Caco-2 (cell line): ENCODE measurements at regions of chr1 and their contacts with region 1.

Region 1: DNA sequence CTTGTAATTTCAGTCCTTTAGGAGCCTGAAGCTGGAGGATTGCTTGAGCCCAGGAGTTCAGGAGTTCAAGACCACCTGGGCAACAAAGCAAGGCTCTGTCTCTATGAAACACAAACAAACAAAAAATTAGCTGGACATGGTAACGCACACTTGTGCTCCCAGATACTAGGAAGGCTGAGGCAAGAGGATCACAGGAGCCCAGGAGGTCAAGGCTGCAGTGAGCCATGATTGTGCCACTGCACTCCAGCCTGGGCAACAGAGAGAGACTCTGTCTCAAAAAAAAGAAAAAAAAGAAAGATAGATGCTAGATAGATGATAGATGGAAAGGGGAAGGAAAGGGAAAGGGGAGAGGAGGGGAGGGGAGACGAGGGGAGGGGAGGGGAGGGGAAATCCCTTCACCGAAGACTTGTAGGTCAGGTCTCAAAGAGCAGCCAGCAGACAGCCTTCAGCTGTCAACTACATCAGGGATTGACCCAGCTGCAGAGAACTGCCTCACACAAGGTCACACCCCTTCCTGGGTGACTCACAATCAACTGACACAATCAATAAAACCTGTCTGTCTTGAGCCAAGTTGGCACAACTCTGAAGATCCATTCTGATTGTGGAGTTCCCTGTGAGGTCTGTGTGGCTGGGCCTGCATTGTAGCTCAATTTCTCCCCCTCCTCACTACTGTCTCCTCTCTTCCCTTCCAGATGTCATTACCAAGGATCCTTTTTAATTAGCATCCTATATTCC is 200.6 kb downstream of the RGS7 start:
- DNase-seq: peak in 1 of 2 experiments; percentile 5
- H3K4me3 ChIP-seq: no peak overlapping the region
- H3K4me3 Mint-ChIP-seq: no peak overlapping the region
- H3K27ac Mint-ChIP-seq: no peak overlapping the region
- H3K4me1 ChIP-seq: no peaks in the 10 kb centered on the region
- H3K4me1 Mint-ChIP-seq: peaks cover 7% of the 10 kb centered on the region
- H3K27me3 ChIP-seq: no peaks in the 10 kb centered on the region
- H3K27me3 Mint-ChIP-seq: no peaks in the 10 kb centered on the region
- CTCF ChIP-seq: no peak

Region 2: GRCh38 chr1:241007668-241008067 is 148.7 kb before region 1 on chr1:
- CTCF ChIA-PET with region 1: no interaction called
- POLR2A ChIA-PET with region 1: no interaction called
- intact Hi-C with region 1: no loop called
- DNase-seq: no peak
- H3K4me3 ChIP-seq: no peak overlapping the region
- H3K4me3 Mint-ChIP-seq: no peak overlapping the region
- H3K27ac Mint-ChIP-seq: no peak overlapping the region
- H3K4me1 ChIP-seq: no peaks in the 10 kb centered on the region
- H3K4me1 Mint-ChIP-seq: no peaks in the 10 kb centered on the region
- H3K27me3 ChIP-seq: no peaks in the 10 kb centered on the region
- H3K27me3 Mint-ChIP-seq: no peaks in the 10 kb centered on the region
- CTCF ChIP-seq: no peak

Region 3: DNA sequence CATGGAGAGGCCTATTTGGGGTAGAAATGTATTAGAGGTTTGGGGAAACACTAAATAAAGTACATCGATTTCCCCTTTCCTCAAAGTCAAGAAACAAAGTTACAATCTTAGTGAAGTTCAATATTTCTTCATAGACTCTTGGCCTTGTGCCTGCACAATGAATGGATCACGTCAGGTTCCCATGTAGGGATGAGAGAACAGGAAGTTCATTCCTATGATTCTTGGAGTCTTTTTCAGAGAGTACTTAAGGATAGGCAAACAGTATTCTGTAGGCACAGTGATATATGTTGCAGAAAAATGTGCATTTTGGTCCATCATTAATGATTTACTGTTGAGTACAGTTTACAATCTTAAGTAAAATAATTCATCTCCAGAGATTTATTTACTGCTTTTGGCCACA is 74.9 kb before region 1 on chr1:
- CTCF ChIA-PET with region 1: no interaction called
- POLR2A ChIA-PET with region 1: no interaction called
- intact Hi-C with region 1: no loop called
- DNase-seq: no peak
- H3K4me3 ChIP-seq: no peak overlapping the region
- H3K4me3 Mint-ChIP-seq: no peak overlapping the region
- H3K27ac Mint-ChIP-seq: no peak overlapping the region
- H3K4me1 ChIP-seq: no peaks in the 10 kb centered on the region
- H3K4me1 Mint-ChIP-seq: no peaks in the 10 kb centered on the region
- H3K27me3 ChIP-seq: no peaks in the 10 kb centered on the region
- H3K27me3 Mint-ChIP-seq: no peaks in the 10 kb centered on the region
- CTCF ChIP-seq: no peak

Region 4: DNA sequence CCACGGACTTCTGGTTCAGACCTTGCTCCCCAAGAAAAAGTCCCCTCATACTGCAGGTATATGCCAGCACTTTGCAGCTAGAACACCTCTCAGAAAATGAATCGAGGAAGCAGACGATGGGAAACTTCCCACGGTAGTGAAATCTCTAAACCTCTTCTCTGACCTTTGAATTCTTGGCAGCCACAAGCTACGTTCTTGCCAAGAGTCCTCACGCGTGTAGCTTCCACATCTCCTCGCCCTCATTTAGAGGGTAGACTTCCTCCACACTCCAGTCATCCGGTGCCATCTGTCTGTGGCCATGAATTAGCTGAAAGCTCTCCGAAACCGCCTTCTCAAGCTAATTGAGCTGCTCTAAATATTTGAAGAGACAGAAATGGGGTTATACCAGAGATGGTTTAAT is 72.8 kb after region 1 on chr1:
- CTCF ChIA-PET with region 1: no interaction called
- POLR2A ChIA-PET with region 1: no interaction called
- intact Hi-C with region 1: loop called (anchors 2 kb)
- DNase-seq: no peak
- H3K4me3 ChIP-seq: no peak overlapping the region
- H3K4me3 Mint-ChIP-seq: no peak overlapping the region
- H3K27ac Mint-ChIP-seq: no peak overlapping the region
- H3K4me1 ChIP-seq: no peaks in the 10 kb centered on the region
- H3K4me1 Mint-ChIP-seq: no peaks in the 10 kb centered on the region
- H3K27me3 ChIP-seq: no peaks in the 10 kb centered on the region
- H3K27me3 Mint-ChIP-seq: no peaks in the 10 kb centered on the region
- CTCF ChIP-seq: no peak

Region 5: DNA sequence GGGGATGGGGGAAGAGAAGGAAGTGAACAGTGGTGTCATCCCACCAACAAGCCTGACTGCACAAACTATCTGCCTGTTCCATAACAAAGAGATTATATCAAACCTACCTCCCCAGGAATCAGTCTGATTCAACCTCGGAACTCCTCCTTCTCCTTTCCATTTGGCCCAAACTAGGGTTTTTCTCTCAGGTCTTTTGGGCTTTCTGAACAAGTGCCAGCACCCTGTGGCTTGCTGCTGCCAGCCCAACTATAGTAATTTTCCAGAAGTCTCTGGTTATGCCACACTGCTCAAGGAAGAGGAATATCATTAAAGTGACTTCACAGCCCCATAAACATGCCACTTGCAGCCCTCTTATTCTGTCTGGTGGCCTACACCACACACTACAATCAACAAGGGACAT is 130.1 kb after region 1 on chr1:
- CTCF ChIA-PET with region 1: no interaction called
- POLR2A ChIA-PET with region 1: no interaction called
- intact Hi-C with region 1: loop called (anchors 1 kb)
- DNase-seq: no peak
- H3K4me3 ChIP-seq: no peak overlapping the region
- H3K4me3 Mint-ChIP-seq: no peak overlapping the region
- H3K27ac Mint-ChIP-seq: no peak overlapping the region
- H3K4me1 ChIP-seq: no peaks in the 10 kb centered on the region
- H3K4me1 Mint-ChIP-seq: no peaks in the 10 kb centered on the region
- H3K27me3 ChIP-seq: no peaks in the 10 kb centered on the region; the same call in 1 of the 2 replicates
- H3K27me3 Mint-ChIP-seq: no peaks in the 10 kb centered on the region
- CTCF ChIP-seq: no peak

Region 6: DNA sequence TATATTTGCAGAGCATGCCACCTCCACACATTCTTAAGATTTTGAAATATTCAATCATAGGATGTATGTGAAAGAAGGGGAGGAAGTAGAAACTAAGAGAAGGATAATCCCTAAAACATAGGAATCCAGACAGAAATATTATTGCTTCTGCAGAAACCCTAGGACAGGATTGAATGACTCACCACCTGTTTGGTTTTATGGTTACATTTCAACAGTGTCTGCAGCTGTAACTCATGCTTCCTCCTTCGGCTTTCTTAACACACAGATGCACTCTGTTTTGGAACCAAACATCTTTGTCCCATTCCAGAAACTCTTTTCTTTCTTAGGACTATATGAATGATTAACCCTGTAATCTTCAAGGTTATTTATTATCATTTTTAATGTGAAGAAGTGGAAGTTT is 179.9 kb after region 1 on chr1:
- CTCF ChIA-PET with region 1: no interaction called
- POLR2A ChIA-PET with region 1: no interaction called
- intact Hi-C with region 1: no loop called
- DNase-seq: no peak
- H3K4me3 ChIP-seq: no peak overlapping the region
- H3K4me3 Mint-ChIP-seq: no peak overlapping the region
- H3K27ac Mint-ChIP-seq: no peak overlapping the region
- H3K4me1 ChIP-seq: no peaks in the 10 kb centered on the region
- H3K4me1 Mint-ChIP-seq: no peaks in the 10 kb centered on the region
- H3K27me3 ChIP-seq: no peaks in the 10 kb centered on the region
- H3K27me3 Mint-ChIP-seq: peaks cover 17% of the 10 kb centered on the region
- CTCF ChIP-seq: no peak

Region 7: DNA sequence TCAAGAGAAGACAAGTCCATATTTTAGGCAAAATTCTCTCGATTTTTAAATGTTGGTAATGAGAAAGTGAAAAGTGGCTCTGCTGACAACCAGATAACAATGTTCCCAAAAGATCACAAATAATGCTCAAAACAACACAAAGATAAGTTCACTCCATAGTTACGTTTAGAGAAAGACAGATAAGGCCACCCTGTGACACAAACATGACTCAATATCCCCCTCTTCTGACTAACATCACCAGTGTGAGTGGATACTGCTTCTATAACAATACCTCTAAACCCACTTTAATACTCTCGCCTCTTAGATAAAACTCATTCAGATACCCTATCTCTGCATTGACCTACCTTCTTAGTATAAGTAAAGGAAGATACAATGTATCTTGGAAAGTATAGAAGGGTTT is 251.8 kb after region 1 on chr1:
- CTCF ChIA-PET with region 1: no interaction called
- POLR2A ChIA-PET with region 1: no interaction called
- intact Hi-C with region 1: loop called (anchors 5 kb)
- DNase-seq: peak in 1 of 2 experiments; percentile 4
- H3K4me3 ChIP-seq: no peak overlapping the region
- H3K4me3 Mint-ChIP-seq: no peak overlapping the region
- H3K27ac Mint-ChIP-seq: no peak overlapping the region
- H3K4me1 ChIP-seq: no peaks in the 10 kb centered on the region
- H3K4me1 Mint-ChIP-seq: no peaks in the 10 kb centered on the region
- H3K27me3 ChIP-seq: no peaks in the 10 kb centered on the region
- H3K27me3 Mint-ChIP-seq: peaks cover 6% of the 10 kb centered on the region
- CTCF ChIP-seq: peak; percentile 18 to 28

Region 8: GRCh38 chr1:241485554-241485992 is 329.2 kb after region 1 on chr1:
- CTCF ChIA-PET with region 1: no interaction called
- POLR2A ChIA-PET with region 1: no interaction called
- intact Hi-C with region 1: loop called (anchors 10 kb)
- DNase-seq: peak in 1 of 2 experiments; percentile 13
- H3K4me3 ChIP-seq: no peak overlapping the region
- H3K4me3 Mint-ChIP-seq: no peak overlapping the region
- H3K27ac Mint-ChIP-seq: no peak overlapping the region
- H3K4me1 ChIP-seq: no peaks in the 10 kb centered on the region
- H3K4me1 Mint-ChIP-seq: no peaks in the 10 kb centered on the region
- H3K27me3 ChIP-seq: no peaks in the 10 kb centered on the region
- H3K27me3 Mint-ChIP-seq: no peaks in the 10 kb centered on the region
- CTCF ChIP-seq: peak; percentile 40 to 63

Region 9: GRCh38 chr1:241499910-241500309 is 343.5 kb after region 1 on chr1:
- CTCF ChIA-PET with region 1: no interaction called
- POLR2A ChIA-PET with region 1: no interaction called
- intact Hi-C with region 1: loop called (anchors 1 kb)
- DNase-seq: no peak
- H3K4me3 ChIP-seq: no peak overlapping the region
- H3K4me3 Mint-ChIP-seq: no peak overlapping the region
- H3K27ac Mint-ChIP-seq: no peak overlapping the region
- H3K4me1 ChIP-seq: no peaks in the 10 kb centered on the region
- H3K4me1 Mint-ChIP-seq: no peaks in the 10 kb centered on the region
- H3K27me3 ChIP-seq: no peaks in the 10 kb centered on the region
- H3K27me3 Mint-ChIP-seq: no peaks in the 10 kb centered on the region
- CTCF ChIP-seq: peak; percentile 34 to 44

Region 10: DNA sequence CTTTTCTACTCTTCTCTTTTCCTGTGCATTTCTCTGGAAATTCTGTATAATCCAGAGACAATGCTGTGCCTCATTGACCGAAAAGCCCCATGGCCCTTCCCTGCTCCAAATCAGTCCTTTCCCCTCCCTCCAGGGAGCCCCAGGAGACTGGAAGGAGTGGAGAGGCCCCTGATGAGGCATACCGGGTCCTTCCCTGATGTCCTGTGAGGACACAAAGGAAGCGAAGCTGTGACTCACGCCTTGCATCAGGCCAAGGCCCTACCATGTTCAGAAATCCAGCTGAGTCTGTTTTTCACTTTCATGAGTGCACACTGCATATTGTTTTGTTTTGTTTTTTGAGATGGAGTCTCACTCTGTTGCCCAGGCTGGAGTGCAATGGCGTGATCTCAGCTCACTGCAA is 762.5 kb after region 1 on chr1:
- CTCF ChIA-PET with region 1: no interaction called
- POLR2A ChIA-PET with region 1: no interaction called
- intact Hi-C with region 1: no loop called
- DNase-seq: no peak
- H3K4me3 ChIP-seq: no peak overlapping the region
- H3K4me3 Mint-ChIP-seq: no peak overlapping the region
- H3K27ac Mint-ChIP-seq: no peak overlapping the region
- H3K4me1 ChIP-seq: no peaks in the 10 kb centered on the region
- H3K4me1 Mint-ChIP-seq: peaks cover 7% of the 10 kb centered on the region
- H3K27me3 ChIP-seq: no peaks in the 10 kb centered on the region
- H3K27me3 Mint-ChIP-seq: no peaks in the 10 kb centered on the region
- CTCF ChIP-seq: no peak